Right ventricle myocardium inferior (tissue), 1 donor: ENCODE measurements at regions of chr5 and their contacts with region 1.

Region 1: DNA sequence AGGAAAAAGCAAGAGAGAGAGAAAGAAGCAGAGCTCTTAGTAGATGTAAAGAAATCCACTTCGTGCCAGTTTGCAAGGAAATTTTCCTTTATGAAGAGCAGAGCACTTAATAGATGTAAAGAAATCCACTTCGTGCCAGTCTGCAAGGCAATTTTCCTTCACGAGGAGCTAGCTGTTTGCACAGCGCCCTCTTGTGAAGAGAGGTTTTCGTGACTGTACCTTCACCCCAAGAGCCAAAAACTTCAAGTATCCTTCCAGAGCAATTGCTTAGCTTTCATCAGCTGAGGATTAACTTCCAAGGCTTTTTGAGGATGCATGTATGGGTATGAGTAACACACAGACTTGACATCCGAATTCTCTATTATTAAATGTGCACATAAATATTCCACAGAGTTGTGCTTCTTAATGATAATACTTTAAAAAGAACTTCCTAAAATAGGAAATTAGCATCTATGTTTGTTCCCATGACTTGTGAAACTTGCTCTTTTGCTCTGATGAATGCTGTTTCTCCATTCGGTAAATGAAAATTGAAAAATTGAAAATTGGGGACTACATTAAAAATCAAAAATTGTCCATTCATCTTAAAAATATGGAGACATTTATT is 525.6 kb downstream of the PDE4D start:
- DNase-seq: no peak
- ATAC-seq: peak; percentile 59

Region 2: DNA sequence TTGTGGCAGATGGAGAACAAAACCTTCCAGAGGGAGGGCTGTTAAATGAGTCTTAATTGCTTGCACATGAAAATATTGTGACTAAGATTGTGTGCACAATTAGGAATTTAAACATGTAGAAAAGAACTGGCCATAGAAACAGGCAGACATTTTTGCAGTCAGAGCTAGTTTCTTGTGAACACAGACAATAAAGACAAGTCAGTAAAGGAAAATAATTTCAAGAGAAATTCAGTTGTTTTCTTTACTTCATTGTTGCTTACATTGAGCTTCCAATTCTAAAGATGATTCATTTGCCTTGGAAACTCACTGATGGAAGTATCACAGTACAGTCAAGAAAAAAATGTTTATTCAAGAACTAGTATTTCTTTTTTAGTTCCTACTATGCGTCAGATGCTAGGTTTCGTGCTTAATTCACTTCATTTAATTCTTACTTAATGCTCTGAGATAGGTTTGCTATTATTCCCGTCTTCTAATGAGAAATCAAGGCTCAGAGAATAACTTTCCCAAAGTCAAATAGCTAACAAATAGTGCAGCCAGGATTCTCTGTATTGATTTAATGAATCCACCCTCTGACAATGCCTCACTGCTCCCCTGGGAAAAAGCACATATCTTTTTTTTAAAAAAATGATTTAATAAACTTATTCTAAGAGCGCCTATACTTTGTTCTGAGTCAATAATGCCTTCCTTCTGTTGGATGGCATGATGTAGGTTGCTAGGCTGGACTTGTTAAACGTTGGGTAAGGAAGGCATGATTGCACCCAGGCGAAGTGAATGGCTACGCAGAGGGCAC is 203.7 kb before region 1 on chr5:
- intact Hi-C with region 1: no loop called
- DNase-seq: no peak
- ATAC-seq: no peak

Region 3: DNA sequence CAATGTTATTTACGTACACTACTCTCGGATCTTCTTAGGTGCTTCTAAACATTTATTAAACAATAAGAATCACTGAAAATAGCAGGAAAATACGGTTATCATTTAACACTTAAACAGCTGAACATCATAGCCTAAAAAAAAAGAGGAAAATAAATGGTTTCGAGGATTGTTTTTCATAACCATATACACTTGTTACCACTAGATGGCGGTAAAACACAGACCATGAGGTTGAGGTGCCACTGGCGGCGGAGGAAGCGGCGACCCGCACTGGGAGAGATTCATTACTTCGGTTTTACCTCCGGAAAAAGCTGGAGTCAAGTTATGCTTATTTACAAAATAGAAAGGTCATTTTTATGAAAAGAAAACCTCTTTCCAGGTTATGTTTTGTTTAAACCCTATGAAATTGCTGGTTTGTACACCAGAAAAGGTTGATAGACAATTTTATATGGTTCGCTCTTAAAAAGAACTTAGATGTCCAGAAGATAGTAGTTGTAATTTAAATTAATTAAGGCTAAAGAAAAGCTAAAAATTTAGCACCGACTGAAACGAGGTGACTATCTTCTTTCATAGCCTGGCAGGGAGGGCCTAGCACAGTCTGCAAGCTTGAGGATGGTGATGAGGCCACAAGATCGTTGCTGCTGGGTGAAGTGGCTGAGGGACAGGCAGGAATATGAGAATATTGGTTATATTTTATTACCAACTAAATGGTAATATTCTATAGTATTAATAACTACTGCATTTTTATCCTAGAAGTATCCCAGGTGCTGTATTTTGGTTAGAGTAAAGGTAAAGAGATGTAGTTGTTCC is 179.3 kb before region 1 on chr5:
- intact Hi-C with region 1: loop called (anchors 2 kb)
- DNase-seq: peak; percentile 90
- ATAC-seq: peak; percentile 81

Region 4: GRCh38 chr5:59218424-59219045 is 149.4 kb before region 1 on chr5:
- intact Hi-C with region 1: loop called (anchors 2 kb)
- DNase-seq: no peak
- ATAC-seq: no peak

Region 5: GRCh38 chr5:59335544-59335943 is 32.3 kb before region 1 on chr5:
- intact Hi-C with region 1: no loop called
- DNase-seq: no peak
- ATAC-seq: no peak